ENCODE measurements at regions of chr12 and their contacts with region 1.

Region 1: GRCh38 chr12:85280165-85280983 is at the start of gene ALX1:
- DNase-seq: peak; percentile 86
- H3K4me3 ChIP-seq: peak within 1 kb of the TSS; percentile 49 to 84 (median 70)
- H3K27ac ChIP-seq: peak within 1 kb of the TSS; percentile 72
- H3K4me1 ChIP-seq: peaks cover 5% of the 10 kb centered on the region
- H3K27me3 ChIP-seq: peaks cover 20 to 28% of the 10 kb centered on the region in 2 experiments
- CTCF ChIP-seq: peak in 1 of 2 donors; percentile 8
- POLR2A ChIP-seq: peak; percentile 71
- total RNA-seq, gene ALX1: 2.2 and 3.4 TPM in 2 replicates

Region 2: GRCh38 chr12:84912198-84913128 is 367.9 kb before region 1 on chr12 and contains the start of gene SLC6A15:
- CTCF ChIA-PET with region 1: no interaction called
- POLR2A ChIA-PET with region 1: no interaction called
- dilution Hi-C with region 1: no loop called
- intact Hi-C with region 1: loop called (anchors 10 kb)
- DNase-seq: peak; percentile 27
- H3K4me3 ChIP-seq: peak within 1 kb of the TSS; percentile 40 to 71 (median 70)
- H3K27ac ChIP-seq: no peak within 1 kb of the TSS
- H3K4me1 ChIP-seq: peaks cover 23% of the 10 kb centered on the region
- H3K27me3 ChIP-seq: peaks cover 19 to 34% of the 10 kb centered on the region in 2 experiments
- CTCF ChIP-seq: peak; percentile 42 to 51
- POLR2A ChIP-seq: no peak
- total RNA-seq, gene SLC6A15: 0.24 and 1.1 TPM in 2 replicates

Region 3: DNA sequence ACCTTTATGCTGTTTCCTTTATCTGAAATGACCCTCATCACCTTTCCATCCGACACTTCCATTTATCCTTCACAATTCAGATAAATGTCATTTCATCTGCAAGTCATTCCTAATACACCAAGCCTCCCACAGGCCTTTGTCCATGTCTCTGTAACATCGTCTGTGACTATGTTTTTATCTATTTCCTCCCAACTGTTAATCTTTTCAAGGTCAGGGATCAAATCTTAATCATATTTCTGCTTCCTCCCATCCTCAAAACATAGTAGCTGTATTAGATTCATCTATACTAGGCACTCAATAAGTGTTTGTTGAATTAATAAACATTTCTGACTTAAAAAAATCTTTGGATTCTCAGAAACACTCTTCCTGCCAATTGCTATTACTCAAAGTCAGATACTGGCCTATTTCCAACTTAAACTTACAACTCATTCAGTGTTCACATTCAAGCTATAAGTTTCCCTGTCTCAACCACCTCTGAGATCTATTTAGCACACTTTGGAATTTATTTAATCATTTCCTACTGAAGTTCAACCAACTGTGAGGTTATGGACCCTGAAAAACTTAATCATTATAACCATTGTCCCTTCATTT is 100.6 kb before region 1 on chr12:
- CTCF ChIA-PET with region 1: interaction called, 7 read pairs
- POLR2A ChIA-PET with region 1: no interaction called
- dilution Hi-C with region 1: no loop called
- intact Hi-C with region 1: loop called (anchors 5 kb)
- DNase-seq: peak; percentile 95
- H3K4me3 ChIP-seq: no peak overlapping the region
- H3K27ac ChIP-seq: peak overlapping the region; percentile 43
- H3K4me1 ChIP-seq: peaks cover 24% of the 10 kb centered on the region
- H3K27me3 ChIP-seq: no peaks in the 10 kb centered on the region
- CTCF ChIP-seq: no peak
- POLR2A ChIP-seq: peak; percentile 48

Region 4: GRCh38 chr12:85448548-85449139 is 168.3 kb after region 1 on chr12:
- CTCF ChIA-PET with region 1: interaction called, 10 read pairs
- POLR2A ChIA-PET with region 1: no interaction called
- dilution Hi-C with region 1: no loop called
- intact Hi-C with region 1: no loop called
- DNase-seq: peak; percentile 42
- H3K4me3 ChIP-seq: no peak overlapping the region
- H3K27ac ChIP-seq: no peak overlapping the region
- H3K4me1 ChIP-seq: no peaks in the 10 kb centered on the region
- H3K27me3 ChIP-seq: no peaks in the 10 kb centered on the region
- CTCF ChIP-seq: no peak
- POLR2A ChIP-seq: no peak